Heart left ventricle (tissue), 16 donors: ENCODE measurements at regions of chr17 and their contacts with region 1.

Region 1: GRCh38 chr17:2602597-2603017 is 9.2 kb downstream of the PAFAH1B1 start:
- DNase-seq: no peak
- ATAC-seq: no peak
- H3K4me3 ChIP-seq: no peak overlapping the region
- H3K27ac ChIP-seq: no peak overlapping the region
- H3K4me1 ChIP-seq: peaks cover 0 to 85% (median 67%) of the 10 kb centered on the region in 12 donors
- H3K27me3 ChIP-seq: no peaks in the 10 kb centered on the region
- CTCF ChIP-seq: no peak
- POLR2A ChIP-seq: no peak

Region 2: GRCh38 chr17:2656283-2656682 is 53.7 kb after region 1 on chr17:
- intact Hi-C with region 1: loop called in 2 of 10 experiments (anchors 10 kb)
- DNase-seq: no peak
- ATAC-seq: no peak
- H3K4me3 ChIP-seq: no peak overlapping the region
- H3K27ac ChIP-seq: no peak overlapping the region
- H3K4me1 ChIP-seq: peaks cover 0 to 41% (median 10%) of the 10 kb centered on the region in 12 donors
- H3K27me3 ChIP-seq: no peaks in the 10 kb centered on the region
- CTCF ChIP-seq: no peak
- POLR2A ChIP-seq: no peak